CD4-positive, alpha-beta T cell (primary cell): ENCODE measurements at regions of chr10 and their contacts with region 1.

Region 1: GRCh38 chr10:79203833-79204232 is 135.1 kb downstream of the ZMIZ1 start:
- DNase-seq: no peak
- ATAC-seq: no peak
- H3K4me3 ChIP-seq: no peak overlapping the region
- H3K4me3 Mint-ChIP-seq: no peak overlapping the region
- H3K27ac ChIP-seq: no peak overlapping the region
- H3K27ac Mint-ChIP-seq: no peak overlapping the region
- H3K4me1 ChIP-seq: no peaks in the 10 kb centered on the region
- H3K4me1 Mint-ChIP-seq: no peaks in the 10 kb centered on the region
- H3K27me3 ChIP-seq: no peaks in the 10 kb centered on the region
- H3K27me3 Mint-ChIP-seq: no peaks in the 10 kb centered on the region
- CTCF ChIP-seq: no peak

Region 2: DNA sequence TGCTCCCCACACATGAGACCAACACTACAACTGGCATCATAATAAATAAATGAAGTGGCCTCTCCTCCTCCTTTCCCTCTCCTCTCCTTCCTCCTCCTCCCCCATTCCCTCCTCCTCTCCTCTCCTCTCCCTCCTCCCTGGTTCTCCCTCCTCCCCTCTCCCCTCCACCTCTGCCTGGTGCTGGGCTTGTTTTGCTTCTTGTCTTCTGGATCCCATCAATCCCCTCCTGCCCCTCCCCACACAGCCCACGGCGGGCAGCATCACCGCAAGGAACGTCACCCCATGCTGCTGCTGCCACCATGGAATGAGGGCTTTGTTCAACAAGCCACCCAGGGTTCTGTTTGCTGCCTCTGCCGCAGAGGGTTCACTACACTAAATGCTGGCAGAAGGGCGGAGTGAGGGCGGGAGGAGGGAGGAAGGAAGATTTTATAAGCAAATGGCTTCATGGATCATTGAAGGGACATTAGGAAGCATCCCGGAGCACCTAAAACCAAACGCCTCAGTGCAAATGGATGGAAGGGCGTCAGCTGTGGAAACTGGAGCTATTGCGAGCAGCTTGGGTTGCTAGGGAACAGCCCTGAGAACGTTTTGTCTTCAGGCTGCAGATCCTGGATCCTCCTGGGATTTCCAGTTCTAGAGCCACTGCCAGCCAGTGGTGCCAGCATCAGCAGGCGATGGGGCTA is 514.8 kb before region 1 on chr10:
- CTCF ChIA-PET with region 1: no interaction called
- POLR2A ChIA-PET with region 1: no interaction called
- intact Hi-C with region 1: no loop called
- DNase-seq: no peak
- ATAC-seq: no peak
- H3K4me3 ChIP-seq: no peak overlapping the region
- H3K4me3 Mint-ChIP-seq: no peak overlapping the region
- H3K27ac ChIP-seq: no peak overlapping the region
- H3K27ac Mint-ChIP-seq: no peak overlapping the region
- H3K4me1 ChIP-seq: no peaks in the 10 kb centered on the region
- H3K4me1 Mint-ChIP-seq: no peaks in the 10 kb centered on the region
- H3K27me3 ChIP-seq: peaks cover 0 to 2% of the 10 kb centered on the region in 2 experiments
- H3K27me3 Mint-ChIP-seq: peaks cover 9% of the 10 kb centered on the region
- CTCF ChIP-seq: no peak

Region 3: DNA sequence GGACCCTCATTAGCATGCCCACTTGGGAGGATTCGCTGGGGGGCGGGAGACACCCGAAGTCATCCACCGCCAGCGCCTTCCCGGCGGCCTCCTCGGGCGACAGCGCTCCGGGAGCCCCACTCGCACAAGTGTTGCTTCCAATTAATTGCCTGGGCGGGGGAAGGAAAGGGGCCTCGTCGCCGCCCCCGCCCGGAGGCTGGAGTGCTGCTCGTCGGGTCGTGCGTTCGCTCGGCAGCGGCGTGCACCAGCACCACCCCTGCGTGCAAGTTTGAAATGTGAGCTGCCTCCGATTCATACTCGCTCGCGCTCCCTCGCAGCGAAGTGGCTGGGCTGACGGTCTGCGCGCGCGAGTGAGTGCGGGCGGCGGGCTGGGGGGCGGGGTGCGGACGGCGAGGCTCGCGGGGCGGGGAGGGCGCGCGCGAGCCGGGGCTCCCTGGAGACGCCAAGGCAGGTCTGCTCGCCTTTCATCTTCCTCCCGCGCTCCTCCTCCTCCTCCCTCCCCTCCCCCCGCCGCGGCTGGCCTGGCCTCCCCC is 38.9 kb after region 1 on chr10:
- CTCF ChIA-PET with region 1: no interaction called
- POLR2A ChIA-PET with region 1: no interaction called
- intact Hi-C with region 1: loop called in 1 of 2 experiments (anchors 2 kb)
- DNase-seq: peak in 11 of 14 experiments; percentile 11 to 79 (median 37)
- ATAC-seq: peak; percentile 57
- H3K4me3 ChIP-seq: peak overlapping the region; percentile 63
- H3K4me3 Mint-ChIP-seq: peak overlapping the region; percentile 54
- H3K27ac ChIP-seq: no peak overlapping the region
- H3K27ac Mint-ChIP-seq: no peak overlapping the region
- H3K4me1 ChIP-seq: peaks cover 56% of the 10 kb centered on the region
- H3K4me1 Mint-ChIP-seq: peaks cover 44% of the 10 kb centered on the region
- H3K27me3 ChIP-seq: no peaks in the 10 kb centered on the region
- H3K27me3 Mint-ChIP-seq: no peaks in the 10 kb centered on the region
- CTCF ChIP-seq: no peak